Posterior vena cava (tissue), 2 donors: ENCODE measurements at regions of chr2 and their contacts with region 1.

Region 1: DNA sequence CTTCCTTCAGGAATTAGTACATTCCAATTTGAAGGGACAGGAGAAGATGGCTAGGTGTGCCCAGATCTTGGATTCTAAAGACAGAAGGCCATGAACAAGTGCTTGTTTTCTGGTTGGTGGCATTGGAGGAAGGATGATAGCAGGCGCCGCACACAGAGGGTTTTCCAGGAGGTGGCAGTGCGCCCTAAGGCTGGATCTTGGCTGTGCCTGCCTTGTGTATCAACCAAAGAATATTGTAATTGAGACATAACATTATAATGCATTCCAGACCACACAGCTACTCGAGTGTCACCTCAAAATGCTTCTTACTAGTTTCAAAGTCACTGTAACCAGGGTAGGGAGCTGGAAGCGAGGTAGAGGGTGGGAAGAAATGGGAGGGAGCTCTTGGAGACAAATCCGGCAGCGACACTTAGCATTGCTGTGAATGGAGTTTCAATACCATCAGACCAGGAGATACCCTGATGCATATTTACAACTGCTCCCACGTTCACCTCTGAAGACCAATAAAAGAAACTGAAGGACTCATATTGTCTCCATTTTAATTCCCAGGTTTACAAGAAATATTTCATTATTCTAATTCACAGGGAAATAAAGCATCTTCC is 42.5 kb downstream of the CPO start:
- DNase-seq: peak; percentile 91

Region 2: DNA sequence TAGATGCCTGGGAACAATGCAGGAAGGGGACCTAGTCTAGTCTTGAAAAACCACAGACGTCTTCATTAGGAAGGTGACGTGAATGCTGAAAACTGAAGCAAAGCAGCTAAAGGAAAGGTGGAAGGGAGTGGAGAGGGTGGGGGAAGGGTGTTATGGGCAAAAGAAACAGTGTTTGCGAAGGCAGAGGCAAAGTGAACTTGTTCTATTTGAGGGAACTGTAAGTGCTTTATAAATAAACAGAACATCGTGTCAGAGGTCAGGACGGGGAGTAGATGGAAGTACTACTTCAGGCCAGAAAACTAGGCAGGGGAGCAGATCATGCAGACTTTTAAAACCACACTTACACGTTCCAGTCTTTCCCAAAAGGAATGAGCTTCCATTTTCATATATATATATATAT is 158.7 kb before region 1 on chr2:
- intact Hi-C with region 1: no loop called
- DNase-seq: no peak

Region 3: DNA sequence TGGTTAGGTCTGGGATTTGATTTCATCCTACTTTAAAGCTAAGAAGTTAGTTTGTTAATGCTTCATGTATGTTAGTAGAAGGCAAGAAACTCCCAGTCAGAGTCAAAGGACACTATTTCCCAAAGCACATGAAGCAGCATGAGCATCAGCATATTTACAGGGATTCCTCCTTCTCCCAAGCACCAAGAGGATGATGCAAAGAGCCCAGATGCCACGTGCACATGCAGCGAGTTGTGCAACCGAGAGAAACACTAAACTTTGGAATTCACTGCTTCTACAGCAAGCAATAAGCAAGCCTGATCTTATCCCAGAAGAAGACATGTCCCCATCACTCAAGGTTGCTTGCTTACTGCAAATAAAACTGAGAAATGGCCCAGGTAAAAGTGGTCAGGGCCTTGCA is 10.0 kb before region 1 on chr2:
- intact Hi-C with region 1: no loop called
- DNase-seq: peak; percentile 88

Region 4: GRCh38 chr2:207230261-207231105 is 248.6 kb after region 1 on chr2:
- intact Hi-C with region 1: loop called in 1 of 2 experiments (anchors 10 kb)
- DNase-seq: no peak

Region 5: DNA sequence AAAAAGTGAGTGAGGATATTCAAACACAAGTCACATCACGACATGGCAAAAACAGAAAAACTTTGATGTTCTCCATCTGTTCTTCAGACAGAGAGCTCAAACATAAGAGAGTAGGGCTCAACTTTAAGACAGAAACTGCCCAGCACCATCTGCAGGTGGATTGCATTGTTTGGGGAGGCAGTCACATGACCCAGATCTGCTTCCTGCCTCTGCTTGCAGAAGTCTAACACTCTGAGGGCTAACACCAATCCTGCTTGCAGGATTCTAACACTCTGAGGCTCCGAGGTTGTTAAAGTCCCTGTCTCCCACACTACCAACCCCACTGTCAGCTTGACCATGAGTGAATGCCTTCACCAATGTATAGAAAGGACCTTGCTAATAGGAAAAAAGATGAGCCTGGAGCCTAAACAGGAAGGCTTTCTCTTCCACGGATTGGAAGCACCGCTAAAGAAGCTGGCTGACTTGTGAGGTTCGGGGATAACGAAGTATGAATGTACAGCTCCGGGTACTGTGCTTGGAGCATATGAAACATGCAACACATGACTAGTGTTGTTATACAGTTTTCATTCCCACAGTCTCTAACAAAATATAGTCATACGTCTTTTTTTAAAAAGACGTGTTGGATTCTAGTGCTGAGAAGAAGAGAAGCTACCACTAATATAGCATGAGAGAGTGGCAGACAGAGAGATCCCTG is 371.3 kb after region 1 on chr2:
- intact Hi-C with region 1: loop called in 1 of 2 experiments (anchors 10 kb)
- DNase-seq: no peak

Region 6: DNA sequence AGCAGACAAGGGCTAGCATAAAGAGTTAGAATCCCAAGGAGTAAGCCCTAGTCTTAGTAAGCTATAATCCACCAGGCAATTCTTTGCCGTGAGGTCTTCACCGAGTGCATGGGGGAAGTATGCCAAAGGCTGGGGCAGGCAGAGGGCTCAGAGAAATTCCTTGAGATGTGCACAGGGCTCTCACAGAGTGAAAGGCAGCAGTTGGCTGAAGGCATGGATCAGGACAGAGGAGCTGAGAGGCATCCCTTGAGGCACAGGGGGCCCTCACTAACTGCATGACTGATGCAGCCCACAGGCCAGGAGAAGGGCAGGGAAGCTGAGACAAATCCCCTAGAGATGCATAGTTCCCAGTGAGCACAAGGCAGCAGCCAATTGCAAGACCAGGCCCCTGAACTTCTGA is 1458.9 kb after region 1 on chr2:
- intact Hi-C with region 1: no loop called
- DNase-seq: no peak